ENCODE measurements at regions of chr13 and their contacts with region 1.

Region 1: GRCh38 chr13:94362411-94362909 is 117.0 kb downstream of the DCT start:
- DNase-seq: peak; percentile 80
- ATAC-seq: peak; percentile 96
- H3K4me3 Mint-ChIP-seq: no peak overlapping the region
- H3K27ac Mint-ChIP-seq: no peak overlapping the region
- H3K4me1 Mint-ChIP-seq: peaks cover 1% of the 10 kb centered on the region
- H3K27me3 Mint-ChIP-seq: peaks cover 2% of the 10 kb centered on the region

Region 2: GRCh38 chr13:94143624-94144350 is 218.7 kb before region 1 on chr13:
- CTCF ChIA-PET with region 1: no interaction called
- POLR2A ChIA-PET with region 1: no interaction called
- DNase-seq: no peak
- ATAC-seq: no peak
- H3K4me3 Mint-ChIP-seq: no peak overlapping the region
- H3K27ac Mint-ChIP-seq: no peak overlapping the region
- H3K4me1 Mint-ChIP-seq: no peaks in the 10 kb centered on the region
- H3K27me3 Mint-ChIP-seq: no peaks in the 10 kb centered on the region

Region 3: DNA sequence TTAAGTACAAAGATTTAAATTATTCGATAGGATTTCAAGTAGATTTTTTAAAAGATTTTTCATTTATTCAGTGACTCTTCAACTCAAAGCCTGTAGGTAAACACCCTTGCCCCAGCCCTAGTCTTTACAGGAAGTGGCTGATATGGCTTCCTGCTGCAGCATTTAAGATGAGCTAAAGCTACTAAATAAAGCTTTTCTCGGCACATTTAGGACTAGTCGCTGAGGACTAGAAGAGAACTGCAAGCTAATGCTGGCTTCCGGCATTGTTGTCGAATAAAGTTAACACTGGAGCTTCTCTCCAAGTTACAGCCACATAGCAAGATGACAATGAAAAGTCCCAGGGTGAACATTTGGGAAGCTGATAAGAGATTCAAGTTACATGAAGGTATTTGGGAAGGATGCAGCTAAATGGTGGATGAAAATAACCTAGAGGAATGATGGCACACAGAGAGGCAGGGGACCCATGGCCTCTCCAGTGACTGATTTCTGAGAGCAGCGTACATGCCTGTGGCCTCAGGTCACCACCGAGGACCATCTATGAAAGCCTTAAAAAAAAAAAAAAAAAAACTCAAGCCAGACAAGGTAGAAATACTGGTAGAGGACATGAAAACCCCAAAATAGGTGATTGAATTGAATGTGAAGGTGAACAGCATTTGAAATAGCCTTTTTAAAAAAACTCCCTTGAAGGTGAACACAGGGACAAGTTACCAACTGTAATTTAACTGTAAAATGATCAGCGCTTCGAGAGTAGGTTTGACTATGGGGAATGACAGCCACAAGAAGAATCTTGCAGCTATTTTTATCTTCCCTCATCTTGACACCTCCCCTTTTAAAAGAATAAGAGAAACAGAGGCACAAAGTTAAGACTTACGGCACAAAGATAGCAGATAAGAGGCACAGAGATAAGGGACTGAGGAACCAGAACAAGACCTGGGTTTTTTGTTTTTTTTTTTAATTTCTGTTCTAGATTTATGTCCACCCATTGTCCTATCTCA is 38.4 kb before region 1 on chr13:
- CTCF ChIA-PET with region 1: interaction called, 11 read pairs
- POLR2A ChIA-PET with region 1: no interaction called
- DNase-seq: peak; percentile 72
- ATAC-seq: peak; percentile 94
- H3K4me3 Mint-ChIP-seq: peak overlapping the region; percentile 64
- H3K27ac Mint-ChIP-seq: peak overlapping the region; percentile 98
- H3K4me1 Mint-ChIP-seq: peaks cover 57% of the 10 kb centered on the region
- H3K27me3 Mint-ChIP-seq: no peaks in the 10 kb centered on the region

Region 4: GRCh38 chr13:94351292-94351990 is 11.0 kb before region 1 on chr13:
- CTCF ChIA-PET with region 1: interaction called, 12 read pairs
- POLR2A ChIA-PET with region 1: no interaction called
- DNase-seq: no peak
- ATAC-seq: peak; percentile 39
- H3K4me3 Mint-ChIP-seq: no peak overlapping the region
- H3K27ac Mint-ChIP-seq: no peak overlapping the region
- H3K4me1 Mint-ChIP-seq: peaks cover 6% of the 10 kb centered on the region
- H3K27me3 Mint-ChIP-seq: peaks cover 4% of the 10 kb centered on the region

Measured in activated CD8-positive, alpha-beta T cell treated with anti-CD3 and anti-CD28 coated beads, Interleukin-2, amount 10 ng/mL, durations not matched to agents 7 days and 5 days (primary cell).